ENCODE measurements at regions of chr5 and their contacts with region 1.

Region 1: GRCh38 chr5:8908055-8908683 is 637.7 kb downstream of the SEMA5A start:
- DNase-seq: peak; percentile 34
- H3K4me3 ChIP-seq: no peak overlapping the region
- H3K27ac ChIP-seq: no peak overlapping the region
- H3K4me1 ChIP-seq: no peaks in the 10 kb centered on the region
- H3K27me3 ChIP-seq: no peaks in the 10 kb centered on the region
- CTCF ChIP-seq: peak; percentile 73 to 77
- POLR2A ChIP-seq: no peak

Region 2: GRCh38 chr5:8756498-8757084 is 151.6 kb before region 1 on chr5:
- CTCF ChIA-PET with region 1: interaction called, 10 read pairs
- POLR2A ChIA-PET with region 1: no interaction called
- dilution Hi-C with region 1: no loop called
- intact Hi-C with region 1: loop called (anchors 1 kb)
- DNase-seq: peak; percentile 29
- H3K4me3 ChIP-seq: no peak overlapping the region
- H3K27ac ChIP-seq: no peak overlapping the region
- H3K4me1 ChIP-seq: no peaks in the 10 kb centered on the region
- H3K27me3 ChIP-seq: no peaks in the 10 kb centered on the region
- CTCF ChIP-seq: peak; percentile 4 to 22
- POLR2A ChIP-seq: no peak

Region 3: DNA sequence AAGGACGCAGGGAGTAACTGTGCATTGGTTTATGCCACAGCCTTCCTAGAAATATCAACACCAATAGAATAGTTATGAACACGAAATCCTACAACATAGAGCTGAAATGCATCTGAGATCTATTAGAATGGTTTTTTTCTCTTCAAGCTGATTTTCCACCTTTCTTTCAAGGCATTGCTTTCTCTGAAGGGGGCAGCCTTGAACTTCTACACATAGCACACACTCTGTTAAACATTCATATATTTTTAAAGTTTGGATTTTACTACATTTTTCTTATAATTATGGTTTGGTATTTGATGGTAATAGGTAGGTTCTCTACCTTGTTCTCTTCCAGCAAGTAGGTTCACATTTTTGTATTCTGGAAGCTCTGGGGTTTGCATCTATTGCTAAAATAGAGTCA is 24.1 kb before region 1 on chr5:
- CTCF ChIA-PET with region 1: interaction called, 13 read pairs
- POLR2A ChIA-PET with region 1: no interaction called
- dilution Hi-C with region 1: no loop called
- intact Hi-C with region 1: no loop called
- DNase-seq: no peak
- H3K4me3 ChIP-seq: no peak overlapping the region
- H3K27ac ChIP-seq: no peak overlapping the region
- H3K4me1 ChIP-seq: no peaks in the 10 kb centered on the region
- H3K27me3 ChIP-seq: no peaks in the 10 kb centered on the region
- CTCF ChIP-seq: no peak
- POLR2A ChIP-seq: no peak

Measured in endothelial cell of umbilical vein (primary cell).